IMR-90 (cell line): ENCODE measurements at regions of chr13 and their contacts with region 1.

Region 1: GRCh38 chr13:75687150-75687763 is 51.1 kb downstream of the LMO7 start:
- DNase-seq: peak; percentile 68
- ATAC-seq: peak; percentile 40
- H3K4me3 ChIP-seq: no peak overlapping the region
- H3K27ac ChIP-seq: no peak overlapping the region
- H3K4me1 ChIP-seq: peaks cover 21% of the 10 kb centered on the region
- H3K27me3 ChIP-seq: no peaks in the 10 kb centered on the region
- CTCF ChIP-seq: peak; percentile 59
- POLR2A ChIP-seq: no peak
- RAD21 ChIP-seq: peak; percentile 43

Region 2: DNA sequence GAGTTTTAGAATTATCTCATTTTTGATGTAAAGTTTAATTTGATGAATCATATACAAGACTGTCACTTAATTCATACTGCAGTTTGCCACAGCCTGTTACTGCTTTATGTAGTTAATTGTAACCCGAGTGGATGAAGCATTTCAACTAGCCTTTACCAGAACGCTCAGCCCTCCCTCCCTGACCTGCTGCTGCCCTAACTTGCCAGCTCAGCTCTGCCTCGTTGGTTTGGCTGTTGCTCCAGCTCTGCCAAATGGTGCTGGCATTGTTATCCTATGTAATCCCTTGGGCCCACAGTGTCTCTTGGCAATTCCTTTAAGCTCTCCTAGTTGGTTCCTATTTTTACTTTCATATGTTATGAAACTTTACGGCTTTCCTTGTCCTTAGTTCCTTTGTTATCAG is 62.1 kb after region 1 on chr13:
- CTCF ChIA-PET with region 1: no interaction called
- POLR2A ChIA-PET with region 1: no interaction called
- dilution Hi-C with region 1: no loop called
- in situ Hi-C with region 1: no loop called
- intact Hi-C with region 1: no loop called
- DNase-seq: peak; percentile 47
- ATAC-seq: peak; percentile 58
- H3K4me3 ChIP-seq: no peak overlapping the region
- H3K27ac ChIP-seq: peak overlapping the region; percentile 66; the same call in 1 of the 2 replicates
- H3K4me1 ChIP-seq: peaks cover 4% of the 10 kb centered on the region
- H3K27me3 ChIP-seq: no peaks in the 10 kb centered on the region
- CTCF ChIP-seq: no peak
- POLR2A ChIP-seq: no peak
- RAD21 ChIP-seq: no peak

Region 3: GRCh38 chr13:75830842-75831241 is 143.6 kb after region 1 on chr13:
- CTCF ChIA-PET with region 1: interaction called, 3 read pairs
- POLR2A ChIA-PET with region 1: no interaction called
- dilution Hi-C with region 1: no loop called
- in situ Hi-C with region 1: no loop called
- intact Hi-C with region 1: loop called (anchors 10 kb)
- DNase-seq: peak; percentile 78
- ATAC-seq: peak; percentile 28
- H3K4me3 ChIP-seq: no peak overlapping the region
- H3K27ac ChIP-seq: no peak overlapping the region
- H3K4me1 ChIP-seq: peaks cover 6% of the 10 kb centered on the region; the same call in 1 of the 2 replicates
- H3K27me3 ChIP-seq: no peaks in the 10 kb centered on the region
- CTCF ChIP-seq: no peak
- POLR2A ChIP-seq: no peak
- RAD21 ChIP-seq: no peak

Region 4: GRCh38 chr13:75850916-75851315 is 163.7 kb after region 1 on chr13:
- CTCF ChIA-PET with region 1: no interaction called
- POLR2A ChIA-PET with region 1: no interaction called
- dilution Hi-C with region 1: no loop called
- in situ Hi-C with region 1: no loop called
- intact Hi-C with region 1: no loop called
- DNase-seq: no peak
- ATAC-seq: no peak; the same call in 1 of the 2 replicates
- H3K4me3 ChIP-seq: no peak overlapping the region
- H3K27ac ChIP-seq: no peak overlapping the region
- H3K4me1 ChIP-seq: no peaks in the 10 kb centered on the region
- H3K27me3 ChIP-seq: no peaks in the 10 kb centered on the region
- CTCF ChIP-seq: no peak
- POLR2A ChIP-seq: no peak
- RAD21 ChIP-seq: no peak

Region 5: GRCh38 chr13:76016799-76017400 is 329.6 kb after region 1 on chr13:
- CTCF ChIA-PET with region 1: no interaction called
- POLR2A ChIA-PET with region 1: no interaction called
- dilution Hi-C with region 1: no loop called
- in situ Hi-C with region 1: loop called (anchors 25 kb)
- intact Hi-C with region 1: no loop called
- DNase-seq: peak; percentile 23
- ATAC-seq: no peak
- H3K4me3 ChIP-seq: no peak overlapping the region
- H3K27ac ChIP-seq: no peak overlapping the region
- H3K4me1 ChIP-seq: peaks cover 6% of the 10 kb centered on the region
- H3K27me3 ChIP-seq: no peaks in the 10 kb centered on the region
- CTCF ChIP-seq: peak; percentile 42
- POLR2A ChIP-seq: no peak
- RAD21 ChIP-seq: peak; percentile 26; the same call in 1 of the 2 replicates

Region 6: GRCh38 chr13:76723551-76724232 is 1036.4 kb after region 1 on chr13:
- CTCF ChIA-PET with region 1: no interaction called
- POLR2A ChIA-PET with region 1: no interaction called
- dilution Hi-C with region 1: no loop called
- in situ Hi-C with region 1: loop called (anchors 25 kb)
- intact Hi-C with region 1: no loop called
- DNase-seq: peak; percentile 89
- ATAC-seq: peak; percentile 93
- H3K4me3 ChIP-seq: no peak overlapping the region
- H3K27ac ChIP-seq: peak overlapping the region; percentile 64
- H3K4me1 ChIP-seq: peaks cover 7% of the 10 kb centered on the region; the same call in 1 of the 2 replicates
- H3K27me3 ChIP-seq: no peaks in the 10 kb centered on the region
- CTCF ChIP-seq: no peak
- POLR2A ChIP-seq: no peak
- RAD21 ChIP-seq: no peak

Region 7: GRCh38 chr13:76886292-76887075 is 1199.2 kb after region 1 on chr13 and contains the start of gene KCTD12:
- CTCF ChIA-PET with region 1: interaction called, 9 read pairs
- POLR2A ChIA-PET with region 1: no interaction called
- dilution Hi-C with region 1: no loop called
- in situ Hi-C with region 1: no loop called
- intact Hi-C with region 1: loop called (anchors 5 kb)
- DNase-seq: peak; percentile 73
- ATAC-seq: peak; percentile 82
- H3K4me3 ChIP-seq: peak within 1 kb of the TSS; percentile 67
- H3K27ac ChIP-seq: peak within 1 kb of the TSS; percentile 69
- H3K4me1 ChIP-seq: peaks cover 4% of the 10 kb centered on the region; the same call in 1 of the 2 replicates
- H3K27me3 ChIP-seq: no peaks in the 10 kb centered on the region
- CTCF ChIP-seq: peak; percentile 41
- POLR2A ChIP-seq: no peak
- RAD21 ChIP-seq: 0 out of 2 replicates have a peak, but pooled peaks have one; percentile 12
- total RNA-seq, gene KCTD12: 1.8 and 3.9 TPM in 2 replicates

Region 8: DNA sequence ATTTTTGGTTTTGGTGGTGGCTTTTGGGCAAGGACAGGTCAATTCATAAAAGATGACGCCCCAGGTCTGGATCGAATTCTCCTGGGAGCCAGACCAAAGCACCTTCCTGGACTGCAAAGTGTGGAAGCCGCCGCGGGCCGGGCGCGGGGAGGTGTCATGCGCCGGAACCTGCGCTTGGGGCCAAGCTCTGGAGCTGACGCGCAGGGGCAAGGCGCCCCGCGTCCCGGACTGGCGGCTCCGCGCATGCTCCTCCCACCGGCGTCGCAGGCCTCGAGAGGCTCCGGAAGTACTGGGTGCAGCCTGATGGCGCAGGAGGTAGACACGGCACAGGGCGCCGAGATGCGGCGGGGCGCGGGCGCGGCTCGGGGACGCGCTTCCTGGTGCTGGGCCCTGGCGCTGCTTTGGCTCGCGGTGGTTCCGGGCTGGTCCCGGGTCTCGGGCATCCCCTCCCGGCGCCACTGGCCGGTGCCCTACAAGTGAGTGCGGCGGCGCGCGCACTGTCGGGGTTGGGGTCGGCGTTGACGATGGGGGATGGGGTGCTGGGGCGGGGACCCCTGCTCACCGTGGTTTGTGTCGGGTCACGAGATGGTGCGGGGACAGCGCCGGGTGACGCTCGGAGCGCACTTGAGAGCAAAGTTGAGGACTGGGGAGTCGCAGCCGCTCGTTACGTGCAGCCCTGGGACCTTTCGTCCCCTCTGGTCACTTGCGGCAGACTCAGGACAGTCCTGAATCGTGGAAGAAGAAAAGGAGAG is 1304.7 kb after region 1 on chr13 and contains the start of gene CLN5:
- CTCF ChIA-PET with region 1: no interaction called
- POLR2A ChIA-PET with region 1: no interaction called
- dilution Hi-C with region 1: no loop called
- in situ Hi-C with region 1: loop called (anchors 25 kb)
- intact Hi-C with region 1: no loop called
- DNase-seq: peak; percentile 90
- ATAC-seq: peak; percentile 99
- H3K4me3 ChIP-seq: peak within 1 kb of the TSS; percentile 83
- H3K27ac ChIP-seq: peak within 1 kb of the TSS; percentile 60
- H3K4me1 ChIP-seq: peaks cover 4% of the 10 kb centered on the region; the same call in 1 of the 2 replicates
- H3K27me3 ChIP-seq: peaks cover 3% of the 10 kb centered on the region
- CTCF ChIP-seq: no peak
- POLR2A ChIP-seq: peak; percentile 92
- RAD21 ChIP-seq: no peak
- total RNA-seq, gene CLN5: 15.1 and 22.8 TPM in 2 replicates